ENCODE measurements at regions of chr15 and their contacts with region 1.

Region 1: DNA sequence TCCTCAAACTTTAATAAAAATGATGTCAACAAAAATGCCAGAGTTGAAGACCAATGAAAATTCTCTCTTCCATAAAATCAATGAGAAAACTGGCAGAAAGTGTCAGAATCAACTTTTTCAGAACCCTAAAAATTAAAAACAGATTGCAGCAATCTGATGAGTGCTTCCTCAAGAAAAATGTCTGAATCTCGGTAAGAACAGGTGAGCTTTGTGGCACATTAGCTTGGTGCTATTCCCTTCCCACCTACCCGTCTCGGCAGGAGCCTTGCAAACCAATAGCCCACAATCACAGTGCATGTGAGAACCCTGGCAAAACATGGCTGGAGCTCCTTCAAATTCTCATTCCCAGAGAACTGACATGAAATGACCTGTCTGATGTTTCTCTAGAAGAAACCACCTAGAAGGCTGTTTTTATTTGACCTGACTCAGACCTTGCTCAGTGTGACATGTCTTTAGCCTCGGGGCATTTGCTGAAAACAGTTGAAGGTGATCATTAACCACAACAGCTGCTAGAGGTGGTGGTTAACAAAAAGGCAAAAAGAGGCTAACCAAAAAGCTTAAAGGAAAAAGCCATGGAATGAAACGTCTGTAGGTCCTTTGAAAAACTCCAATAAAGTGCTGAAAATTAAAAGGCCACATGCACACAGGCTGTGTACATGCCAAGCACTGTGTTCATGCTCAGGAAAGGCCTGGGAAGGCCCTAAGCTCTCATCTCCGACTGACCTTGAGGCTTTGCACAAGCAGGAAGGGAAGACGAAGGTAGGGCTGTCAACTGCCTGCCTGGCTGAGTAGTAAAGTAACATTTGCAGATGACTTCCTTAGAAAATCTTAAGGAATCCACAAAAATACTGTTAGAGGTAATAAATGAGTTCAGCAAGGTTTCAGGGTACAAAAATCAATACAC is 253.0 kb upstream of the NSMCE3 start:
- DNase-seq: peak; percentile 15
- H3K4me3 ChIP-seq: no peak overlapping the region
- H3K27ac ChIP-seq: peak overlapping the region in 2 of 4 donors; percentile 25 to 42
- H3K4me1 ChIP-seq: peaks cover 0 to 11% (median 2%) of the 10 kb centered on the region in 4 donors
- H3K27me3 ChIP-seq: no peaks in the 10 kb centered on the region
- CTCF ChIP-seq: no peak
- EP300 ChIP-seq: no peak
- POLR2A ChIP-seq: no peak

Region 2: GRCh38 chr15:29613951-29614382 is 91.3 kb after region 1 on chr15:
- in situ Hi-C with region 1: loop called in 1 of 4 experiments (anchors 25 kb)
- intact Hi-C with region 1: no loop called
- DNase-seq: no peak
- H3K4me3 ChIP-seq: no peak overlapping the region
- H3K27ac ChIP-seq: no peak overlapping the region
- H3K4me1 ChIP-seq: no peaks in the 10 kb centered on the region
- H3K27me3 ChIP-seq: peaks cover 5% of the 10 kb centered on the region
- CTCF ChIP-seq: peak in 2 of 5 experiments; percentile 4 to 9
- EP300 ChIP-seq: no peak
- POLR2A ChIP-seq: no peak